GM12878 (cell line): ENCODE measurements at regions of chr4 and their contacts with region 1.

Region 1: DNA sequence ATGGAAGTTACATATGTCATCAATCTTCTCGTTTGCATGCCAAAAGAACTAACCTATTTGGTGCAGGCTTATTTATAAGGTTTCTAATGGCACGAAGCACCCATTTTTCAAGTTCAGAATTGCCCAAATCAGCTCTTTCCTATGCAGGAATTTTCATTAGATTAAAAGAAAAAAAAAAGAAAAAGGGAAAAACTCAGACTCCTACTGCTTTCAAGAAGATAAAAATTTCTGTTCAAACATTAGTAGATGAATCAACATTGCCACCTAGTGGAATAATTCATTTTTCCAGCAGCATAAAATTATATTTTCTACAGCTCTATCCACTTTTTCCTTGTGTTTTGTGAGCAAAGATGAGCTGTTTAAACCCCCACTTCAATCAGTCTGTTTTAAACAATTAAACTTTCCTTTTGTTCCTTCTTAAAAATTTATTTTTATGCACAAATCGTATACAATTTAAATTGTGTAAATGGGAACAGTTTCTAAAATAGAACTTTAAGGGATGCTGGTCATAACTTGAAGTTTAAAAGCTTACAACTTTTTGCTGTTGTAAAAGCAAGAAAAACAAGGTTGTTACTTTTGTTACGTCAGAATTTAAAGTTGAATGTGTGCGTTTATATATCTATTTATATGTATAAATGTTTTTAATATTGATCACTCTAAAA is 309.9 kb downstream of the ARAP2 start:
- DNase-seq: peak; percentile 21
- ATAC-seq: peak; percentile 46
- H3K4me3 ChIP-seq: no peak overlapping the region
- H3K27ac ChIP-seq: no peak overlapping the region
- H3K4me1 ChIP-seq: no peaks in the 10 kb centered on the region
- H3K27me3 ChIP-seq: no peaks in the 10 kb centered on the region
- CTCF ChIP-seq: peak; percentile 34 to 58 (median 43); a peak in 4 of 6 replicates
- EP300 ChIP-seq: no peak
- POLR2A ChIP-seq: no peak
- RAD21 ChIP-seq: peak; percentile 70

Region 2: GRCh38 chr4:35725131-35725530 is 209.3 kb before region 1 on chr4:
- CTCF ChIA-PET with region 1: interaction called, 6 read pairs
- POLR2A ChIA-PET with region 1: no interaction called
- RAD21 ChIA-PET with region 1: no interaction called
- SMC1A ChIA-PET with region 1: no interaction called
- in situ Hi-C with region 1: no loop called
- intact Hi-C with region 1: loop called (anchors 1 kb)
- DNase-seq: no peak
- ATAC-seq: peak; percentile 72
- H3K4me3 ChIP-seq: no peak overlapping the region
- H3K27ac ChIP-seq: no peak overlapping the region
- H3K4me1 ChIP-seq: no peaks in the 10 kb centered on the region
- H3K27me3 ChIP-seq: no peaks in the 10 kb centered on the region
- CTCF ChIP-seq: peak; percentile 14 to 39 (median 24); a peak in 3 of 6 replicates
- EP300 ChIP-seq: no peak
- POLR2A ChIP-seq: no peak
- RAD21 ChIP-seq: no peak

Region 3: DNA sequence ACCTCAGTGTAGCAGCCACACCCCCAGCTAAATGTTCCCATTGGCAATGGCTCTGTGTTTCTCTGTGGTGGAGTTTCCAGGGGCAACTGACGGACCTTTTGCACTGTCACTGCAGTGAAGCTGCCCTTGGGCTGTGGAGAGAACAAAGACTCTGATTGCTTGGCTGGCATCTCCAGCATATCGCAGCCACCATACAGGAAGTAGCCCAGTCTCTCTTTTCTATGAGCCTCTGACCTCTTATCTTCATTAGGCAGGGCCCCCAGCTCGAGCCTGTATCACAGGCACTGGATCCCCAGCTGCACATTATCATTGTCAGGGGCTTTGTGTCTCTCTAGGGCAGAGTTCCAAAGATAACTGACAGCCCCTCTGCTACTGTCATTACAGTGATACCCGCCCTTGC is 173.6 kb before region 1 on chr4:
- CTCF ChIA-PET with region 1: no interaction called
- POLR2A ChIA-PET with region 1: no interaction called
- RAD21 ChIA-PET with region 1: no interaction called
- SMC1A ChIA-PET with region 1: no interaction called
- in situ Hi-C with region 1: no loop called
- intact Hi-C with region 1: no loop called
- DNase-seq: no peak
- ATAC-seq: no peak
- H3K4me3 ChIP-seq: no peak overlapping the region
- H3K27ac ChIP-seq: no peak overlapping the region
- H3K4me1 ChIP-seq: no peaks in the 10 kb centered on the region
- H3K27me3 ChIP-seq: no peaks in the 10 kb centered on the region; a peak in 1 of 4 replicates
- CTCF ChIP-seq: no peak
- EP300 ChIP-seq: no peak
- POLR2A ChIP-seq: no peak
- RAD21 ChIP-seq: no peak

Region 4: DNA sequence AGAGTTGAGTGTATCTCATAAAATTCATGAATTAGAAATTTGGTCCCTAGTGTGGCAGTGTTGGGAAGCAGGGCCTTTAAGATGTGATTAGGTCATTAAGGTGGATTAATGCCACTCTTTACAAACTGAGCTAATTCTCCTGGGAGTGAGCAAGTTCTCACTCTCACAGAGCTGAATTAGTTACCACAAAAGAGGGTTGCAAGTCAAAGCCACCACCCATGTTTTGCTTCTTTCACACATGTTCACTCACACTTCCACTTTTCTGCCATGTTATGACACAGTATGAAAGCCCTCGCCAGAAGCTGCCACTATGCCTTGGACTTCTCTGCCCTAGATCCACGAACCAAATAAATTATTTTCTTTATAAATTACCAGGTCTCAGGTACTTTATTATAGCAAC is 22.3 kb before region 1 on chr4:
- CTCF ChIA-PET with region 1: interaction called, 12 read pairs
- POLR2A ChIA-PET with region 1: no interaction called
- RAD21 ChIA-PET with region 1: interaction called, 11 read pairs
- SMC1A ChIA-PET with region 1: interaction called, 16 read pairs
- in situ Hi-C with region 1: no loop called
- intact Hi-C with region 1: no loop called
- DNase-seq: peak; percentile 52
- ATAC-seq: peak; percentile 97
- H3K4me3 ChIP-seq: no peak overlapping the region
- H3K27ac ChIP-seq: no peak overlapping the region
- H3K4me1 ChIP-seq: no peaks in the 10 kb centered on the region
- H3K27me3 ChIP-seq: no peaks in the 10 kb centered on the region
- CTCF ChIP-seq: no peak
- EP300 ChIP-seq: peak in 1 of 2 experiments; percentile 64; a peak in 2 of 4 replicates
- POLR2A ChIP-seq: no peak
- RAD21 ChIP-seq: no peak

Region 5: DNA sequence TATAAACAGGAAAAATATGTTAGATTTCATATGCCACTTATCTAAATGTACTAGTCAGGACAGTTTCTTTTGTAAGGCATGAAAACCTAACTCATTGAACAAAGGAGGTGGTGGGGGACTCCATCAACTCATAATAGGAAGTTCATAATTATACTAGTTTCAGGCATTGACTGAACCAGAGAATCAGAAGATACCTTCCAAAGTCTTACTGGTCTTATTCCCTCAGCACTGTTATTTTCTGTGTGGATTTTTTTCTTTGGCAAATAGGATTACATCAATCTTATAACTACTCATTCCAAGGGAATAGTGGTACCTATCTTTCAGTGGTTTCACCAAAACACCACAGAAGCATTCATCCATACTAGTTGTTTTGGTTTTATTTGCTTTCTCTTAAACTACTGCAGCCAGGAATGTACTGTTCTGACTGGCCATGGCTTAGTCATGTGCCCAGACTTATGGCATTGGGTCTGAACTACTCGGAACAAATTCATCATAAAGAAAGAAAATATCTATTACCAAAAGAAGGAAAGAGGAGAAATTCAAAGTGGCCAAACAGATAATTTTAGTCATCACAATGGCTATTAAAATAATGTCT is 36.0 kb after region 1 on chr4:
- CTCF ChIA-PET with region 1: no interaction called
- POLR2A ChIA-PET with region 1: no interaction called
- RAD21 ChIA-PET with region 1: no interaction called
- SMC1A ChIA-PET with region 1: no interaction called
- in situ Hi-C with region 1: no loop called
- intact Hi-C with region 1: no loop called
- DNase-seq: no peak
- ATAC-seq: peak; percentile 79
- H3K4me3 ChIP-seq: no peak overlapping the region
- H3K27ac ChIP-seq: no peak overlapping the region
- H3K4me1 ChIP-seq: no peaks in the 10 kb centered on the region
- H3K27me3 ChIP-seq: no peaks in the 10 kb centered on the region
- CTCF ChIP-seq: no peak
- EP300 ChIP-seq: no peak
- POLR2A ChIP-seq: no peak
- RAD21 ChIP-seq: no peak

Region 6: DNA sequence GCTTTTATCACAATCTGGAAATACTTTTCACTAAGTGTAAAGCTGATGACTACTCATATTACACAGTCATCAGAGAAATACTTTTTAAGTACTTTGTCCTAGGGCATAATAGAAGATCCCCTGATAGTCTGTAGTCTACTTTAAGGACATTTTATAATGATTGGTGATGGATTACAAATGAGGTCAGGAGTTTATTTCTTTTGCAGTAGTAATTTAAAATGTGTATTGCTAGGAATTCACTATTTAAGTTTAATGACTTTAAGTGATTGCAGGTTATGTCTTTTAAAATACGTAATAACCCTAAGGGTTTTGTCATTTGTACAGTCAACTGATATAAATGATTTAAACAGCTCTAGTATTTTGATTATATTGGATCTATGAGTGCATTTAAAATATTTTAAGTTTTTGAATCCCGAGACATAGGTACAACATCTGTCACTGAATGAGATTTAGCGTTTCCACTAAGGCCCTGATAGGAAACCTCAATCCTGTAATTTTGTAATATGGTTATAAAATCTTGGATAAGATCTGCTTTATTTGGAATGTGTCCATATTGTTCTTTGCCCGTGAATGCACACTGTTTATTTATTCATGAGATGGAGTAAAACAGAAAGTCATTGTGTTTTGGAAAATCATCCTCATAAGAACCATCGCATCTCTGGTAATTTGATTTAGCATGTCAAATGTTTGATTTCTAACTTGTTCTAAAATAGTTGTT is 120.5 kb after region 1 on chr4:
- CTCF ChIA-PET with region 1: no interaction called
- POLR2A ChIA-PET with region 1: no interaction called
- RAD21 ChIA-PET with region 1: no interaction called
- SMC1A ChIA-PET with region 1: no interaction called
- in situ Hi-C with region 1: no loop called
- intact Hi-C with region 1: no loop called
- DNase-seq: no peak
- ATAC-seq: no peak
- H3K4me3 ChIP-seq: no peak overlapping the region
- H3K27ac ChIP-seq: no peak overlapping the region
- H3K4me1 ChIP-seq: no peaks in the 10 kb centered on the region
- H3K27me3 ChIP-seq: no peaks in the 10 kb centered on the region
- CTCF ChIP-seq: no peak
- EP300 ChIP-seq: no peak
- POLR2A ChIP-seq: no peak
- RAD21 ChIP-seq: no peak

Region 7: GRCh38 chr4:36187723-36188333 is 253.4 kb after region 1 on chr4:
- CTCF ChIA-PET with region 1: interaction called, 7 read pairs
- POLR2A ChIA-PET with region 1: no interaction called
- RAD21 ChIA-PET with region 1: no interaction called
- SMC1A ChIA-PET with region 1: interaction called, 5 read pairs
- in situ Hi-C with region 1: no loop called
- intact Hi-C with region 1: loop called (anchors 2 kb)
- DNase-seq: no peak
- ATAC-seq: peak; percentile 27; the same call in 1 of the 3 replicates
- H3K4me3 ChIP-seq: no peak overlapping the region
- H3K27ac ChIP-seq: no peak overlapping the region
- H3K4me1 ChIP-seq: peaks cover 6% of the 10 kb centered on the region
- H3K27me3 ChIP-seq: no peaks in the 10 kb centered on the region
- CTCF ChIP-seq: peak; percentile 54 to 70 (median 65)
- EP300 ChIP-seq: no peak
- POLR2A ChIP-seq: no peak
- RAD21 ChIP-seq: peak; percentile 70

Region 8: DNA sequence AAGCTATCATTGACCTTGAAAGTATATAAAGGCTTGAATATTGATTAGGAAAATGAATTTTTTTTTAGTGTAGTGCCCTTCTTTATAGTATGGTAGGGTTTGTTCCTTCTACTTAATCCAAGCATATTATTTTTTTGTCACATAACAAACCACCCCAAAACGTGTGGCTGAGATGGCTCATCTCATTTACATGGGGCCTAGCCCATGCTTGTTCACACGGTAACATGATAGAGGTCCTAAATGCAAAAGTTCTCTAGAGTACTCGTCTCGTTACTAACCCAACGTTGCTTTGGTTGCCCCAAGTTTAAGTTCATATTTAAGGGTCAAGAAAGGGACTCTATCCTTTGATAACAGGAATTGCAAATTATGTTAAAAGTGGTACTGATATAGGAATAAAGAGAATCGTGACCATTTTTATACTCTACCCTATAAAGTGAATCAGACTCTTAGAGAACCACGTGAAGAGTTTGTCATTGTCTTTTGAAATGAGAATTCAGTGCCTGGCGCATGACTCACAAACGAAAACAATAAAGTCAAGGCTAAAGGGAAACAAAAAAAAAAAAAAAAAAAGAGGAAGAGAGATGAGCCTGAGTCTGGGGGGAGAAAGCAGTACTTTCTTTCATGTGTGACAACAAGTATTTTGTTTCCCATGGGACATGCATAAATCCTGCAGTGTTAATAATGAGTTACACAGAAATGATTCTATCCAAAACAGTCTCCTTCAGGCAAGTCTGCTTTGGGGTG is 907.3 kb after region 1 on chr4:
- CTCF ChIA-PET with region 1: no interaction called
- POLR2A ChIA-PET with region 1: no interaction called
- RAD21 ChIA-PET with region 1: no interaction called
- SMC1A ChIA-PET with region 1: no interaction called
- in situ Hi-C with region 1: no loop called
- intact Hi-C with region 1: no loop called
- DNase-seq: peak; percentile 35
- ATAC-seq: peak; percentile 86
- H3K4me3 ChIP-seq: no peak overlapping the region
- H3K27ac ChIP-seq: no peak overlapping the region
- H3K4me1 ChIP-seq: no peaks in the 10 kb centered on the region; the same call in 1 of the 2 replicates
- H3K27me3 ChIP-seq: no peaks in the 10 kb centered on the region
- CTCF ChIP-seq: no peak
- EP300 ChIP-seq: peak in 1 of 2 experiments; percentile 81; a peak in 2 of 4 replicates
- POLR2A ChIP-seq: no peak
- RAD21 ChIP-seq: no peak